ENCODE measurements at regions of chr7 and their contacts with region 1.

Region 1: GRCh38 chr7:137656227-137656849 is 190.4 kb downstream of the DGKI start:
- DNase-seq: peak; percentile 20
- ATAC-seq: peak; percentile 90
- H3K4me3 ChIP-seq: no peak overlapping the region
- H3K27ac ChIP-seq: no peak overlapping the region
- H3K4me1 ChIP-seq: no peaks in the 10 kb centered on the region
- H3K27me3 ChIP-seq: no peaks in the 10 kb centered on the region
- CTCF ChIP-seq: peak; percentile 74 to 86 (median 83)
- EP300 ChIP-seq: no peak
- POLR2A ChIP-seq: no peak
- RAD21 ChIP-seq: peak; percentile 96

Region 2: GRCh38 chr7:137196648-137197047 is 459.7 kb before region 1 on chr7:
- CTCF ChIA-PET with region 1: no interaction called
- POLR2A ChIA-PET with region 1: no interaction called
- RAD21 ChIA-PET with region 1: no interaction called
- SMC1A ChIA-PET with region 1: no interaction called
- in situ Hi-C with region 1: no loop called
- intact Hi-C with region 1: no loop called
- DNase-seq: no peak
- ATAC-seq: no peak
- H3K4me3 ChIP-seq: no peak overlapping the region
- H3K27ac ChIP-seq: no peak overlapping the region
- H3K4me1 ChIP-seq: no peaks in the 10 kb centered on the region
- H3K27me3 ChIP-seq: no peaks in the 10 kb centered on the region
- CTCF ChIP-seq: no peak
- EP300 ChIP-seq: no peak
- POLR2A ChIP-seq: no peak
- RAD21 ChIP-seq: no peak

Region 3: DNA sequence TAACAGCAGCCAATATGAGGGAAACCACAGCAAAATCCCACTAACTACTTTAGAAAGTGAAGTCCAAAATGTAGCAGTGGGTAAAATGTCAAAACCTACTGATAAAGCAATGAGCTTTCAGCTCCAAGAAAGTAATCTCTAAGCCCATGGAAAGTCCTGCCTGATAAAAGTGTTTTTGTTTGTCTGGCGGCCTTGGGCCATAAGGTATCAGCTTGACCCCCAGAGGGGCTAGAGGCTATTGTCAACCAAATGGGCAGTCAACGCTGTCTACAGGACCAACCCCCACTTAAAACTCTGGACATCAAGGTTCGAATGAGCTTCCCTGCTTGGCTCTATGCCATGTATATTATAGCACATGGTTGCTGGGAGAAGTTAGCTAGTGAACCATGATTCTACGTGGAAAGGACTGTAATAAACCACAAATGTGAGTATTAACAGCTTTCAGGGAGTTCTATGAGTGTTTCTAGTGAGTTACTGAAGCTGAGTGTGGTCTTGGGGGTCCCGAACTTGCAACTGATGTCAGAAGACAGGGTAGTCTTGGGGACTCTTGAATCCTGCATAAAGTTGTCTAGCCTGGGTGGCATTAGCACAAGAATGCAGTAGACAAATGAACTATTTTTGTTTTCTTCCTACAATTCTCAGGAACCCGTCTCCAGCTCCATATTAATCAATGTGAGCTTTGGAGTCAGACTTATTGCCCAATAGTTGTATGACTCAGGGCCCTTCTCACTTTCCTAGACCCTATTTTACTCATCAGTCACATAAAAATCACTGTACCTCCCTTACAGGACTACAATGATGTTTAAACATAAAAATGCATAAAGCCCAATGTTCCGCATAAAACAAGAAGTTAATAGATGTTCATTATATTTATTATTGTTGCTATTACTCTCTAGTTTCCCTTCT is 25.6 kb after region 1 on chr7:
- CTCF ChIA-PET with region 1: no interaction called
- POLR2A ChIA-PET with region 1: no interaction called
- RAD21 ChIA-PET with region 1: interaction called, 6 read pairs
- SMC1A ChIA-PET with region 1: interaction called, 11 read pairs
- in situ Hi-C with region 1: no loop called
- intact Hi-C with region 1: no loop called
- DNase-seq: no peak
- ATAC-seq: no peak
- H3K4me3 ChIP-seq: no peak overlapping the region
- H3K27ac ChIP-seq: no peak overlapping the region
- H3K4me1 ChIP-seq: no peaks in the 10 kb centered on the region
- H3K27me3 ChIP-seq: no peaks in the 10 kb centered on the region
- CTCF ChIP-seq: no peak
- EP300 ChIP-seq: no peak
- POLR2A ChIP-seq: no peak
- RAD21 ChIP-seq: no peak

Region 4: DNA sequence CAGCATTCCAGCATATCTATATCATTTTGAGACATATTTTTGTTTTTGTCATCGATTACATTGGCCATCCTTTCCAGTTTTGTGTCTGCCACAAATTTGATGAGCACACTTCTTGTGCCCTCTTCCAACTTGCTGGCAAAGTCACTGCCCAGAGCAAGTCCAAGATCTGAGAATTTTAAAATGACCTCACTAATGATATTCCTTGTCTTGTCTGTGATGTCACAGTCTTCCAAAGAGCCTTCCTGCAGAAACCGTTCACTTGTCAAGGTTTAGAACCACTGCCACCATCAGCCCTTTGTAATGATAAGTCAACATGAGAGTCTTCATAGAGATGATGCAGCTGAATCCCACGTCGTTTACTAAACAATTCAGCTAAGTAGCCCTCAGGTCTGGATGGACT is 109.0 kb after region 1 on chr7:
- CTCF ChIA-PET with region 1: interaction called, 18 read pairs
- POLR2A ChIA-PET with region 1: interaction called, 3 read pairs
- RAD21 ChIA-PET with region 1: interaction called, 7 read pairs
- SMC1A ChIA-PET with region 1: interaction called, 34 read pairs
- in situ Hi-C with region 1: no loop called
- intact Hi-C with region 1: no loop called
- DNase-seq: no peak
- ATAC-seq: no peak
- H3K4me3 ChIP-seq: no peak overlapping the region
- H3K27ac ChIP-seq: no peak overlapping the region
- H3K4me1 ChIP-seq: no peaks in the 10 kb centered on the region
- H3K27me3 ChIP-seq: no peaks in the 10 kb centered on the region
- CTCF ChIP-seq: no peak
- EP300 ChIP-seq: no peak
- POLR2A ChIP-seq: no peak
- RAD21 ChIP-seq: no peak

Region 5: DNA sequence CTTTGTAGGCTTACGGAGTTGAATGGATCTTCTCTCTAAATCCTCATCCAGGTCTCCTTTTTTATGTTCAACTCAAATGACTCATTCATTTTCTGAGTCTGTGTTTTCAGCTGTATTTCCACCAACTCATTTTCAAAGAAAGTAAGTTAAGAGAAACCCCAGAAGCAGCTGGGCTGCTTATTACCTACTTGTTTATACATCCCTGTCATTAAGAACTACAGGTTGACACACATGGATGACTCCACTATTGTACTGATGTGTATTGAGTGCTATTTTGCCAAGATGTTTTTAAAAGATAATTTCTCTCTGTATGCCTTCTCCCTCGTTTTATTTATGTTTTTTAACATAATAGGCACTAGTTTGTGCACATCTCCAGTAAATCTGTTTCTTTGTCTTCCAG is 148.5 kb after region 1 on chr7:
- CTCF ChIA-PET with region 1: interaction called, 21 read pairs
- POLR2A ChIA-PET with region 1: no interaction called
- RAD21 ChIA-PET with region 1: interaction called, 9 read pairs
- SMC1A ChIA-PET with region 1: interaction called, 11 read pairs
- in situ Hi-C with region 1: no loop called
- intact Hi-C with region 1: no loop called
- DNase-seq: no peak
- ATAC-seq: peak; percentile 67
- H3K4me3 ChIP-seq: no peak overlapping the region
- H3K27ac ChIP-seq: no peak overlapping the region
- H3K4me1 ChIP-seq: no peaks in the 10 kb centered on the region
- H3K27me3 ChIP-seq: no peaks in the 10 kb centered on the region
- CTCF ChIP-seq: no peak
- EP300 ChIP-seq: no peak
- POLR2A ChIP-seq: no peak
- RAD21 ChIP-seq: no peak

Region 6: DNA sequence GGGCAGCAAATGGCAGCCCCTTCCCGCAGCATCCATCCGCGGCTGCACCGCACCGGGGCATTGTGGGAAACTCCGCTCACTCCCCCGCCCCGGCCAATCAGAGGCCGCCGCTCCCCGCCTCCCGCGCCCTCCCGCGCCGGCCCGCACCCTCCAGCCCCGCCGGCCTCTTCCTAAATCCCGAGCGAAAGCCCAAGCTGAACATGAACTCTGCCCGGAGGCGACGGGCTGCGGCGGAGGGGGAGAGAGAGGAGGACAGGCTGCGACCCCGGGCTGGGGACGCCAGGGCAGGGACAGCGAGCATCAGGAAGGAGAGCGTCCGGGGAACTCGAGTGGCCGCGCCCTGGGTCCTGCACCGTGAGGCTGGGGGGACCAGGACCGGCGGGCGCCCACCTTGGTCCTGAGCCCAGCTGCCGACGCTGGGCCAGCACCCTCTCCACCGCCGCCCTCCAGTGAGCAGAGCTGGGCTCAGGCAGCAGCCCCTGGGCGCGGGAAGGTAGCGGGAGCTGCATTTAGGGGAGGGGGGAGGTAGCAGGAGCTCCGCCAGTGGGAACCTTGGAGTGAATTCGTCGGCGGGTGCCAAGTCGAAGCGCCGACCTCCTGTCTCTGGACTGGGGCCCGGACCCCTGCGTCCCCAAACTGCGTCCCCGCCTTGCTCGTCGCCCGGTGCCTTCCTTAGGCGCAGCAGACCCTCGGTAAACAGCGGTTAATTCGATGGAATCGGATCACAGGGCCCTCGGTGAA is 190.7 kb after region 1 on chr7 and contains the start of gene DGKI:
- CTCF ChIA-PET with region 1: interaction called, 14 read pairs
- POLR2A ChIA-PET with region 1: interaction called, 5 read pairs
- RAD21 ChIA-PET with region 1: interaction called, 71 read pairs
- SMC1A ChIA-PET with region 1: interaction called, 120 read pairs
- in situ Hi-C with region 1: no loop called
- intact Hi-C with region 1: no loop called
- DNase-seq: no peak
- ATAC-seq: peak; percentile 67
- H3K4me3 ChIP-seq: peak within 1 kb of the TSS; percentile 17; the same call in 1 of the 2 replicates
- H3K27ac ChIP-seq: no peak within 1 kb of the TSS
- H3K4me1 ChIP-seq: no peaks in the 10 kb centered on the region
- H3K27me3 ChIP-seq: peaks cover 1 to 14% of the 10 kb centered on the region in 2 experiments; a peak in 2 of 4 replicates
- CTCF ChIP-seq: no peak
- EP300 ChIP-seq: no peak
- POLR2A ChIP-seq: peak; percentile 51
- RAD21 ChIP-seq: no peak
- polyA plus RNA-seq, gene DGKI: 28.3 to 37.1 TPM

Region 7: GRCh38 chr7:137898839-137899721 is 242.7 kb after region 1 on chr7:
- CTCF ChIA-PET with region 1: interaction called, 156 read pairs
- POLR2A ChIA-PET with region 1: interaction called, 12 read pairs
- RAD21 ChIA-PET with region 1: interaction called, 94 read pairs
- SMC1A ChIA-PET with region 1: interaction called, 173 read pairs
- in situ Hi-C with region 1: loop called (anchors 5 kb)
- intact Hi-C with region 1: loop called (anchors 1 kb)
- DNase-seq: peak; percentile 48
- ATAC-seq: peak; percentile 79
- H3K4me3 ChIP-seq: 0 out of 2 replicates have a peak overlapping the region, but pooled peaks have one; percentile 1
- H3K27ac ChIP-seq: peak overlapping the region; percentile 75
- H3K4me1 ChIP-seq: peaks cover 33% of the 10 kb centered on the region
- H3K27me3 ChIP-seq: no peaks in the 10 kb centered on the region
- CTCF ChIP-seq: peak; percentile 88 to 98 (median 98)
- EP300 ChIP-seq: no peak
- POLR2A ChIP-seq: no peak
- RAD21 ChIP-seq: peak; percentile 99

Region 8: DNA sequence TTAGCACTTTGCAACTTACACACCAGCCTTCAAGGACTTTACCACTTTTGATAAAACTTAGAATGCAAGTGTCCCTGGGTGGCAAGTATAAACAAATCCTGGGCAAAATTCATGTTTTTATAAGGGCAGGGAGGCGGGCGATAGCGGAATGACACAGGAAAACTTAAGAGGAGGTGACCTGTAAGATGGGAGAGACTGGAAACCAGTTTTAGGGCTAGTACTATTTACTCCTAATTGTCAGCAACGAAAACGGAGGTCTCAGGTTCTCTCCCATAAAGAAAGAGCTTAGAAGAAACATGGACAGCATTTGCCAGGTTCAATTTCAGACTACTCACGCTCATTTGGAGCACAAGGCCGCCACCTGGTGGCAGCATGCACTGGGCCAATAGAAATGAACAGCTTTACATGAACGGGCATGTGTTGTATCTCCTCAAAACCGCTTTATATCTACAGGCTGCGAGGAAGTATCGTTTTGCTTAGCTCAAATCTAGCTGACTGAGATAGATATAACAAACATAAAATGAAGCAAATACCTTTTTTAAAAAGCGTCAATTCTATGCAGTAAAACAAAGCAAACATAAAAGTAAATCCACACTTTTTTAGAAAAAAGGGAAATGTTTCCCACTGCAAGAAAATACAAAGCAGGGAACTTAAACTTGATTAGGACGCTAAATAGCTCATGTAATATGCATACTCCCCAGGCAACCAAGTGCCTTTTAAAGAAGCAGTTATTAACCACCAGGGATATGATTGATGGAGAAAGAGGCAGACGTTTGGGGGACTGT is 1082.4 kb after region 1 on chr7:
- CTCF ChIA-PET with region 1: interaction called, 3 read pairs
- POLR2A ChIA-PET with region 1: no interaction called
- RAD21 ChIA-PET with region 1: no interaction called
- SMC1A ChIA-PET with region 1: no interaction called
- in situ Hi-C with region 1: no loop called
- intact Hi-C with region 1: loop called (anchors 10 kb)
- DNase-seq: peak; percentile 64
- ATAC-seq: peak; percentile 99
- H3K4me3 ChIP-seq: no peak overlapping the region
- H3K27ac ChIP-seq: no peak overlapping the region
- H3K4me1 ChIP-seq: no peaks in the 10 kb centered on the region
- H3K27me3 ChIP-seq: no peaks in the 10 kb centered on the region
- CTCF ChIP-seq: peak; percentile 87 to 98 (median 94); a peak in 5 of 6 replicates
- EP300 ChIP-seq: no peak
- POLR2A ChIP-seq: no peak
- RAD21 ChIP-seq: peak; percentile 98

Measured in GM12878 (cell line).